ENCODE measurements at regions of chr3 and their contacts with region 1.

Region 1: GRCh38 chr3:186783073-186783730 is at the start of gene EIF4A2:
- DNase-seq: peak; percentile 91
- H3K4me3 Mint-ChIP-seq: peak within 1 kb of the TSS; percentile 99
- H3K27ac Mint-ChIP-seq: peak within 1 kb of the TSS; percentile 100
- H3K4me1 Mint-ChIP-seq: peaks cover 40% of the 10 kb centered on the region
- H3K27me3 Mint-ChIP-seq: no peaks in the 10 kb centered on the region
- total RNA-seq, gene EIF4A2: 385 to 388 TPM

Region 2: GRCh38 chr3:185929192-185930151 is 853.7 kb before region 1 on chr3:
- CTCF ChIA-PET with region 1: no interaction called
- POLR2A ChIA-PET with region 1: interaction called, 50 read pairs
- DNase-seq: no peak
- H3K4me3 Mint-ChIP-seq: peak overlapping the region; percentile 51
- H3K27ac Mint-ChIP-seq: peak overlapping the region; percentile 25
- H3K4me1 Mint-ChIP-seq: peaks cover 94% of the 10 kb centered on the region
- H3K27me3 Mint-ChIP-seq: no peaks in the 10 kb centered on the region

Region 3: GRCh38 chr3:186570096-186570940 is 212.9 kb before region 1 on chr3 and contains the start of gene DNAJB11:
- CTCF ChIA-PET with region 1: interaction called, 7 read pairs
- POLR2A ChIA-PET with region 1: interaction called, 121 read pairs
- DNase-seq: peak; percentile 99
- H3K4me3 Mint-ChIP-seq: peak within 1 kb of the TSS; percentile 96
- H3K27ac Mint-ChIP-seq: peak within 1 kb of the TSS; percentile 92
- H3K4me1 Mint-ChIP-seq: peaks cover 62% of the 10 kb centered on the region
- H3K27me3 Mint-ChIP-seq: no peaks in the 10 kb centered on the region
- total RNA-seq, gene DNAJB11: 50.7 to 55.7 TPM

Region 4: DNA sequence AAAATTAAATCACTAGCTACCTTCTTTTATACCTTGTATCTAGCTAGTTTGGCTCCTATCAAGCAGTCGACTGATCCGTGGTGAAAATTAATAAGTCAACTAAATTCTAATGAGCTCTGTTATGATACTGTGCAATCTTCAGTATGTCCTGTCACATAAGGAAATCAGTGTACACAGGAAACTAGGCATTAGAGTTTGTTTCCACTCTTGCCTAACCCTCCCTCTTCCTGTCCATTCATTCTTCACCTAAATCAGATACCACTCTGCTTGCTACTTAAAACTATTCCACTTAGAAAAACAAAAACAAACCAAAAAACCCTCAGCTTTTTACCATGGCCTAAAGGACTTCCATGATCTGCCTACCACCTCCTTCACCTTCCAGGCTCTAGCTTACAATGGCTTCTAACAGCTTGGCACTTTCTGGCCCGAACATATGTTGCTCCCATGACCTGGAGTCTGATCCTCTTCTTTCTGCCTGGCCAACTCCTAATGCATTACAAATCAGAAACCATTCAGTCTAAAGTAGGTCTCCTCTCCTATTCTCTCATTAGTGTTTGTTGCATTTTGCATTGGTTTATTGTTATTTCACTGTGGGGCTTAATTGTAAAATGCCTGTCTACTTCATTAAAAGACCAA is 15.2 kb after region 1 on chr3:
- CTCF ChIA-PET with region 1: interaction called, 4 read pairs
- POLR2A ChIA-PET with region 1: interaction called, 232 read pairs
- DNase-seq: no peak
- H3K4me3 Mint-ChIP-seq: no peak overlapping the region
- H3K27ac Mint-ChIP-seq: peak overlapping the region; percentile 55
- H3K4me1 Mint-ChIP-seq: peaks cover 53% of the 10 kb centered on the region
- H3K27me3 Mint-ChIP-seq: no peaks in the 10 kb centered on the region

Region 5: DNA sequence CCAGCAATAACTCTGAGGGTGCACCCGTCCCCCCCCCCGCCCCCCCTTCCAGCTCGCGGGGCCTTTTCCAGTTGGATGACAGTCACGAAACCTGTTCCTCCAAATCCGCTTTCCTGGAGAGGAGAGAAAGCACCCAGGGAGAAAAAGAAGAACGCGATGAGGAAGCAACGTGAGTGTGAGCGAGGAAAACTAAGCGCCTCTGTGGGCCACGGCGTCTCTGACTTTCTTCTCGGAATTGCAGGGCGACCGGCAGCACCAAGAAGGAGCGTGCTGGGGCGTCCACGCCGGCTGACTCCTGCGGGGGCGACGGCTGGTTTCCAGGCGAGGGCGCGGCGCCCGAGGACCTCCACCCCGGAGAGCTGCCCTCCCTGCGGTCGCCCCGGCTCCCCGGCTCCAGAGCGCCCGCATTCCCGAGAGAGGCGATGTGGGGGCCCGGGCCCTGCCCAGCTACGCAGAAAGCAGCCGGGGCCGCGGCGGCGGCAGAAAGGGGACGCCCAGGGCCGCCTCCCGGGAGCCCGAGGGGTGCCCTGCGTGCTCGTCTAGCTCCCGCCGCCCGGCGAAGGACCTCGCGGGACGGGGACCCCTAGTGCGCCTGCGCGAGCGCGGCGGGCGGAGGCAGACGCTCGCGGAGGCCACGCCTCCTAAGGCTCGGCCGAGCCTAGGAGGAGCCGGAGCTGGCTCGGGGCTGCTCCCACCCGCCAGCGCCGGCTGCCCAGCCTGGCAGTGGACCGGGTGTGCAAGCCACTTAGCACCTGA is 44.0 kb after region 1 on chr3:
- CTCF ChIA-PET with region 1: interaction called, 3 read pairs
- POLR2A ChIA-PET with region 1: interaction called, 60 read pairs
- DNase-seq: peak; percentile 89
- H3K4me3 Mint-ChIP-seq: peak overlapping the region; percentile 75
- H3K27ac Mint-ChIP-seq: peak overlapping the region; percentile 57
- H3K4me1 Mint-ChIP-seq: peaks cover 27% of the 10 kb centered on the region
- H3K27me3 Mint-ChIP-seq: peaks cover 39% of the 10 kb centered on the region

Region 6: DNA sequence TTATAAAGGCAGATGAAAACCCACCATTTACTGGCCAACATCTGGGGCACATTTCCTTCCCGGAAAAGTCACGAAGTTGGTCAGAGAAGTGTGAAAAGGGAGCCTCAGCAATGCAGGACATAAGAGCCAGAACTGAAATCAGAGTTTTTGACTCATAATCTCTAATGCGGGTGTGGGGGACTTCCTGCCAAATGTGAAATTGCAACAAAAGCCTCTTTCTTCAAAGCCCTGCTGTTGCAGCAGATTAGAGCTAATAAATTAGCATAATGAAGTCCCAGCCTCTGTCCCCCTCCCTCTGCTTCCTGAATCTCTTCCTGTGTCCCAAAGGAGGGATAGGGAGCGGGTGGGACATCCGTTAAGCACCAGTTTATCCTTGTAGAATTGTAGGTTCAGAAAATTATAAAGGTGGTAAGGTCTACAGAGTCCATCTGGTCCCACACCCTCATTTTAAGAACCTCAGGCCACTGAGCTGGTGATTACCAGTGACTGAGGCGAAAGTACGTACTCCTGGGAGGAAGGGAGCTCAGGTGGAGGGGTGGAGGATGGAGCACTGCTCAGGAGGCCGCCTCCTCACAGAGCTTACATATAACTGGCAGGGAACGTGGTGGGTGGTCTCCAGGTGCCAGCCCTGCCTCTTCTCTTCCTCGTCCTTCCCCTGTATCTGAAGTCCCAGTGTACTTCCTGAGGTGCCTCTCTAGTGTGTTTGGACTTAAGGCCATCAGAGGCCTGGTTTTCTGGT is 182.1 kb after region 1 on chr3:
- CTCF ChIA-PET with region 1: no interaction called
- POLR2A ChIA-PET with region 1: no interaction called
- DNase-seq: no peak
- H3K4me3 Mint-ChIP-seq: no peak overlapping the region
- H3K27ac Mint-ChIP-seq: no peak overlapping the region
- H3K4me1 Mint-ChIP-seq: peaks cover 43% of the 10 kb centered on the region
- H3K27me3 Mint-ChIP-seq: no peaks in the 10 kb centered on the region

Region 7: DNA sequence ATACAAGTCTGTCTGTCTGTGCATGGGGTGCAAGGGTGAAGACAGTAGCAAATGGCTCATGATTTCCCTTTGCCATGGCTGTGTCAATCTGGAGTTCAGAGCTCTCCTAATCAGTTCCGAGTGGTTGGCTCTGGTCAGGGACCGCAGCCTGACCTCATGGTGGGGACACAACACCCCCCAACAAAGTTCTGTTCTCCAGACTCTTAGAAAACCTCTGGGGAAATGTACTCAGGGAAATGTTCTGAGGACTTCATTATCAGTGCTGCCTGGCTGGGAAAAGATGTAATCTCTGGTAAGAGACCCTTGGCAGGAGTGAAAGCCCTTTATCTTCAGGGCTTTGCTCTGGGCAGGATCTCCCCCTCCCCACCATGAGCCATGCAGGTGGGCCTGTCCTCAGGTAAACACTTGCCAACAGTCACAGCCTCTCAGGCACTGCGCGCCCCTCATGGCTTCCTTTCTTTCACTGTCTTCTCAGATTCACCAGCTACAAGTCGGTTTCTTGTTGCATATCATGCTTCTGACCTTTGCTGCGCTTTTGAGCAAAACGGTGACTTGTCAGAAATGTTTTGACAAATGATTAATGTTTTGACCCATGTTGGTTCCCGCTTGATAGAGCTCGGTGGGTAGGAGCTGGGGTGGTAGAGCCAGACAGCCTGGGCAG is 242.6 kb after region 1 on chr3:
- CTCF ChIA-PET with region 1: no interaction called
- POLR2A ChIA-PET with region 1: interaction called, 40 read pairs
- DNase-seq: peak; percentile 47
- H3K4me3 Mint-ChIP-seq: peak overlapping the region; percentile 73
- H3K27ac Mint-ChIP-seq: peak overlapping the region; percentile 88
- H3K4me1 Mint-ChIP-seq: peaks cover 72% of the 10 kb centered on the region
- H3K27me3 Mint-ChIP-seq: no peaks in the 10 kb centered on the region

Region 8: GRCh38 chr3:187139126-187139894 is 356.1 kb after region 1 on chr3 and contains the start of gene RPL39L:
- CTCF ChIA-PET with region 1: interaction called, 5 read pairs
- POLR2A ChIA-PET with region 1: interaction called, 25 read pairs
- DNase-seq: peak; percentile 95
- H3K4me3 Mint-ChIP-seq: peak within 1 kb of the TSS; percentile 86
- H3K27ac Mint-ChIP-seq: peak within 1 kb of the TSS; percentile 90
- H3K4me1 Mint-ChIP-seq: peaks cover 35% of the 10 kb centered on the region
- H3K27me3 Mint-ChIP-seq: peaks cover 4% of the 10 kb centered on the region
- total RNA-seq, gene RPL39L: 23.0 to 23.1 TPM

Measured in activated CD4-positive, alpha-beta memory T cell treated with anti-CD3 and anti-CD28 coated beads, Interleukin-2, amount 10 ng/mL, durations not matched to agents 7 days and 5 days (primary cell).